AG04450 (cell line): ENCODE measurements at regions of chr3 and their contacts with region 1.

Region 1: GRCh38 chr3:136464502-136464901 is 214.4 kb downstream of the PCCB start:
- DNase-seq: peak; percentile 75
- H3K4me3 ChIP-seq: no peak overlapping the region
- H3K27ac ChIP-seq: peak overlapping the region; percentile 92
- H3K27me3 ChIP-seq: no peaks in the 10 kb centered on the region
- CTCF ChIP-seq: no peak

Region 2: DNA sequence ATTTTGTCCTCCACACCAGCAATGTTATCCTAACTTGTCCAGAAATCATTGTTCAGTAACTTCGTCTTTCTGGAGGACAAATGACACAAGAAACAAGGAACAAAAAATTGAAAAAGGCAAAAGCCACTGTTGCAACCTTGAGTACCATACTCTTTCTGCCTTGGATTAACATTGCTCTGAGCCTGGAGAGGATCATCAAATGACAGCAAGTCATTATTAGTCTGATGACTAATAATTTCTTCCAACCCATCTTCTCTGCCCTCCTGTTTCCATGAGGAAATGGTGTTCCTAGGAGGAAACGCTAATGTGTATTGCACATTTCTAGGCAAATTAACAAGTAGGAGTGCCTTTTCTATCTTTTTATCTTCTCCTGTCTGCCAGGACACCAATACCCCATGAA is 60.4 kb before region 1 on chr3:
- CTCF ChIA-PET with region 1: no interaction called
- POLR2A ChIA-PET with region 1: interaction called, 15 read pairs
- DNase-seq: no peak
- H3K4me3 ChIP-seq: no peak overlapping the region
- H3K27ac ChIP-seq: no peak overlapping the region
- H3K27me3 ChIP-seq: no peaks in the 10 kb centered on the region
- CTCF ChIP-seq: no peak

Region 3: DNA sequence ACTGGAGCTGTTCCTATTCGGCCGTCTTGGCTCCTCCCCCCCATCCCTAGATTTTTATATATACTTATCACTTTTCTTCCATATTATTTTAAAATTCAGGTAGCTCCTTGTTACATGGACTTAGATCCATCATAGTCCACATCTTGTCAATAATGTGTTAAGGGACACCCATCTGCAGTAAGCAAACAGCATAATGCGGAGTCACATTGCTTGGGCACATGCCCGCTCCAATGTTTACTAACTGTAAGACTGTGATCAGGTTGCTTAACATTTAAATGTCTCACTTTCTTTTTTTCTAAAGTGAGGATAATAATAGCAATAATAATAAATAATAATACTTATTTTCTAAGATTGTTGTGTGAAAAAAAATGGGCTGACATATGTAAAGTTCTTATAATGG is 996.4 kb after region 1 on chr3:
- CTCF ChIA-PET with region 1: no interaction called
- POLR2A ChIA-PET with region 1: no interaction called
- DNase-seq: no peak
- H3K4me3 ChIP-seq: no peak overlapping the region
- H3K27ac ChIP-seq: no peak overlapping the region
- H3K27me3 ChIP-seq: no peaks in the 10 kb centered on the region
- CTCF ChIP-seq: no peak